ENCODE measurements at regions of chr14 and their contacts with region 1.

Region 1: GRCh38 chr14:103078093-103078749 is 5.8 kb upstream of the LBHD2 start:
- DNase-seq: peak; percentile 60 to 83 (median 74)
- ATAC-seq: peak; percentile 85
- H3K4me3 ChIP-seq: no peak overlapping the region
- H3K4me3 Mint-ChIP-seq: peak overlapping the region in 2 of 10 donors; percentile 3 to 37
- H3K27ac ChIP-seq: no peak overlapping the region
- H3K27ac Mint-ChIP-seq: no peak overlapping the region
- H3K4me1 ChIP-seq: peaks cover 0 to 5% of the 10 kb centered on the region in 2 donors
- H3K4me1 Mint-ChIP-seq: peaks cover 0 to 2% (median 0%) of the 10 kb centered on the region in 7 donors
- H3K27me3 ChIP-seq: no peaks in the 10 kb centered on the region
- H3K27me3 Mint-ChIP-seq: no peaks in the 10 kb centered on the region

Region 2: DNA sequence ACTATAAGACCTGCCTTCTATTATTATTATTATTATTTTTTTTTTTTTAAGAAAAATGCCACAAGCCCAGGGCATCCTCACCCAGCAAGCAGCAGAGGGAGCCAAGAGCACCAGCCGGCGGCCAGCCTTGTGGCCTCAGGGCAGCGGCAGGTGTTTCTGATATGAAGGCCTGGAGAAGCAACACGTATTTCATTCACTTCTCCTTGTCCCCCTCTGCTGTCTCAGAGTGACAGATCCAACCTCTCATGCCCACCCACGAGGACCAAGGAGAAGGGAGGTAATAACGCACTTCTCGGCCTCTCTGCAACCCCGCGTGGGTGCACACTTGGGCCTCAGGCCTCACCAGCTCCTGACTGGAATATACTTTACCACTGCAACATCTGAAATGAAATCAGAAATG is 46.3 kb before region 1 on chr14:
- CTCF ChIA-PET with region 1: no interaction called
- POLR2A ChIA-PET with region 1: no interaction called
- intact Hi-C with region 1: no loop called
- DNase-seq: no peak
- ATAC-seq: no peak
- H3K4me3 ChIP-seq: no peak overlapping the region
- H3K4me3 Mint-ChIP-seq: no peak overlapping the region
- H3K27ac ChIP-seq: no peak overlapping the region
- H3K27ac Mint-ChIP-seq: no peak overlapping the region
- H3K4me1 ChIP-seq: no peaks in the 10 kb centered on the region
- H3K4me1 Mint-ChIP-seq: no peaks in the 10 kb centered on the region
- H3K27me3 ChIP-seq: no peaks in the 10 kb centered on the region
- H3K27me3 Mint-ChIP-seq: peaks cover 0 to 4% (median 0%) of the 10 kb centered on the region in 5 donors

Region 3: DNA sequence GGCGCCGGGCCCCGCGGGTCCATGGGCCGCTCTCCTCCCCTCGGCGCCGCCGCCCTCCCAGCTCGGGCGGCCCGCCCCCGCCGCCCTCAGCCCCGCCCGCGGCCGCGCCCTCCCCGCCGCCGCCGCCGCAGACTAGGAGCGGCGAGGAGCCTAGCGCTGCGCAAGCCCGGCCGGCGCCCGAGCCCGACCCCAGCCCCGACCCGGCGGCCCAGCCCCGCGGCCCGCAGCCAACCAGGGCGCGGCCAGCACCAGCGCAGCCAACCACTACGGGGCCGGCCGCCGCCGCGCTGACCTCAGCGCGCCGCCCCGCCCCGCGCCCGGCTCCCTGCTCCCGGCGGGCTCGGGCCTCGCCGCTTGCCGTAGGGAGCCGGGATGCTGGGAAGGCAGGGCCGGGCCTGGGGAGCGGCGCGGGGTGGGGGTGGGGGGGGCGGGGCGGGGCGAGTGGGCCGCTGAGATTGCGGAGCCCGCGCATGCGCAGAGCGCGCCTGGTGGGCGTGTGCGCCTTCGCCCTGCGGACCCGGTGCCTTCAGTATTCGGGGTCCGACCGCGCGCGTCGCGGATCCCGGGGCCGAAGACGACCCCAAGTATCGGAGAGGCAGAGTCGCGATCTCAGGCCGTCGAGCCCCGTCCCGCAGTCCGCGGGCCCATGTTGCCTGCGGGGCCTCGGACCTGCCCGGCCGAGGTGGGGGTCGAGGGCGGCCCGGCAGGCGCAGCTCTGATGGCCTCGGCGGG is 20.7 kb before region 1 on chr14 and contains the start of gene CDC42BPB:
- CTCF ChIA-PET with region 1: no interaction called
- POLR2A ChIA-PET with region 1: no interaction called
- intact Hi-C with region 1: loop called in 1 of 2 experiments (anchors 1 kb)
- DNase-seq: peak; percentile 32 to 60 (median 52)
- ATAC-seq: peak; percentile 91
- H3K4me3 ChIP-seq: peak within 1 kb of the TSS; percentile 39
- H3K4me3 Mint-ChIP-seq: peak within 1 kb of the TSS; percentile 59 to 86 (median 74)
- H3K27ac ChIP-seq: peak within 1 kb of the TSS; percentile 21
- H3K27ac Mint-ChIP-seq: peak within 1 kb of the TSS in 2 of 9 donors; percentile 15 to 49
- H3K4me1 ChIP-seq: no peaks in the 10 kb centered on the region
- H3K4me1 Mint-ChIP-seq: peaks cover 0 to 13% (median 11%) of the 10 kb centered on the region in 7 donors
- H3K27me3 ChIP-seq: peaks cover 3 to 7% of the 10 kb centered on the region in 2 donors
- H3K27me3 Mint-ChIP-seq: peaks cover 9 to 62% (median 14%) of the 10 kb centered on the region in 5 donors
- total RNA-seq, gene CDC42BPB: 0.87 to 16.0 (median 5.5) TPM

Region 4: GRCh38 chr14:103091041-103091882 is 13.0 kb after region 1 on chr14:
- CTCF ChIA-PET with region 1: interaction called, 3 read pairs
- POLR2A ChIA-PET with region 1: no interaction called
- intact Hi-C with region 1: loop called (anchors 1 kb)
- DNase-seq: peak; percentile 38 to 80 (median 64)
- ATAC-seq: peak; percentile 94
- H3K4me3 ChIP-seq: peak overlapping the region; percentile 43
- H3K4me3 Mint-ChIP-seq: peak overlapping the region; percentile 14 to 80 (median 62)
- H3K27ac ChIP-seq: no peak overlapping the region
- H3K27ac Mint-ChIP-seq: no peak overlapping the region
- H3K4me1 ChIP-seq: no peaks in the 10 kb centered on the region
- H3K4me1 Mint-ChIP-seq: peaks cover 0 to 3% (median 0%) of the 10 kb centered on the region in 7 donors
- H3K27me3 ChIP-seq: no peaks in the 10 kb centered on the region
- H3K27me3 Mint-ChIP-seq: peaks cover 0 to 11% (median 5%) of the 10 kb centered on the region in 5 donors

Region 5: GRCh38 chr14:103207029-103207387 is 128.8 kb after region 1 on chr14:
- CTCF ChIA-PET with region 1: no interaction called
- POLR2A ChIA-PET with region 1: no interaction called
- intact Hi-C with region 1: no loop called
- DNase-seq: no peak
- ATAC-seq: no peak
- H3K4me3 ChIP-seq: no peak overlapping the region
- H3K4me3 Mint-ChIP-seq: no peak overlapping the region
- H3K27ac ChIP-seq: no peak overlapping the region
- H3K27ac Mint-ChIP-seq: no peak overlapping the region
- H3K4me1 ChIP-seq: no peaks in the 10 kb centered on the region
- H3K4me1 Mint-ChIP-seq: peaks cover 0 to 6% (median 0%) of the 10 kb centered on the region in 7 donors
- H3K27me3 ChIP-seq: no peaks in the 10 kb centered on the region
- H3K27me3 Mint-ChIP-seq: peaks cover 33 to 59% (median 41%) of the 10 kb centered on the region in 5 donors

Region 6: DNA sequence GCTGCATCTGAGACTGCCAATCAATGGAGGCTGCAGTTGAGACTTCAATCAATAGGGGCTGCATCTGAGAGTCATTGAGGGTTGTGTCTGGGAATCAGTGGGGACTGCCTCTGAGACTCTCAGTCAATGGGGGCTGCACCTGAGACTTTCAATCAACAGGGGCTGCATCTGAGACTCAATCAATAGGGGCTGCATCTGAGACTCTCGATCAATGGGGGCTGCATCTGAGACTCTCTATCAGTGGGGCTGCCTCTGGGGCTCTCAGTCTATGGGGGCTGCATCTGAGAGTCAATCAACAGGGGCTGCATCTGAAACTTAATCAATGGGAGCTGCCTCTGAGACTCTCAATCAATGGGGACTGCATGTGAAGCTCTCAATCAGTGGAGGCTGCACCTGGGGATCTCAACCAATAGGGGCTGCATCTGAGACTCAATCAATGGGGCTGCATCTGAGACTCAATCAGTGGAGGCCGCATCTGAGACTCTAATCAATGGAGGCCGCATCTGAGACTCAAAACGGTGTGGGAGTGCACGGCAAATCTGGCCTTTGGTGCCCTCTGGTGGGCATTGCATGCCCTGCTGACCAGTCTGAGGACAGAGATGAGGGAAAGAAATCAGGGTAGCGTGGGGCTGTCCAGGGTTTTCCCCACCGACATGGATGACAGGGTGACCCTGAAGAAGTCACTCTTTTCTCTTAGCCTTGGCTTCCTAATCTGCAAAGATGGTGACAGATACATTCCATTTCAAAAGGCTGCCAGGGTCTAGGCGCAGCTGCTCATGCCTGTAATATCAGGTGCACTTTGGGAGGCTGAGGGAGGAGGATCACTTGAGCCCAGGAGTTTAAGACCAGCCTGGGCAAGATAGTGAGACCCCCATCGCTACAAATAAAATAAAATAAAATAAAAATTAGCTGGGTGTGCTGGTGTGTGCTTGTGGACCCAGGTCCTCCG is 214.5 kb after region 1 on chr14:
- CTCF ChIA-PET with region 1: no interaction called
- POLR2A ChIA-PET with region 1: no interaction called
- intact Hi-C with region 1: loop called (anchors 1 kb)
- DNase-seq: peak; percentile 34 to 77 (median 56)
- ATAC-seq: peak; percentile 92
- H3K4me3 ChIP-seq: no peak overlapping the region
- H3K4me3 Mint-ChIP-seq: no peak overlapping the region
- H3K27ac ChIP-seq: no peak overlapping the region
- H3K27ac Mint-ChIP-seq: no peak overlapping the region
- H3K4me1 ChIP-seq: no peaks in the 10 kb centered on the region
- H3K4me1 Mint-ChIP-seq: peaks cover 0 to 7% (median 0%) of the 10 kb centered on the region in 7 donors
- H3K27me3 ChIP-seq: no peaks in the 10 kb centered on the region
- H3K27me3 Mint-ChIP-seq: peaks cover 10 to 27% (median 20%) of the 10 kb centered on the region in 5 donors

Region 7: DNA sequence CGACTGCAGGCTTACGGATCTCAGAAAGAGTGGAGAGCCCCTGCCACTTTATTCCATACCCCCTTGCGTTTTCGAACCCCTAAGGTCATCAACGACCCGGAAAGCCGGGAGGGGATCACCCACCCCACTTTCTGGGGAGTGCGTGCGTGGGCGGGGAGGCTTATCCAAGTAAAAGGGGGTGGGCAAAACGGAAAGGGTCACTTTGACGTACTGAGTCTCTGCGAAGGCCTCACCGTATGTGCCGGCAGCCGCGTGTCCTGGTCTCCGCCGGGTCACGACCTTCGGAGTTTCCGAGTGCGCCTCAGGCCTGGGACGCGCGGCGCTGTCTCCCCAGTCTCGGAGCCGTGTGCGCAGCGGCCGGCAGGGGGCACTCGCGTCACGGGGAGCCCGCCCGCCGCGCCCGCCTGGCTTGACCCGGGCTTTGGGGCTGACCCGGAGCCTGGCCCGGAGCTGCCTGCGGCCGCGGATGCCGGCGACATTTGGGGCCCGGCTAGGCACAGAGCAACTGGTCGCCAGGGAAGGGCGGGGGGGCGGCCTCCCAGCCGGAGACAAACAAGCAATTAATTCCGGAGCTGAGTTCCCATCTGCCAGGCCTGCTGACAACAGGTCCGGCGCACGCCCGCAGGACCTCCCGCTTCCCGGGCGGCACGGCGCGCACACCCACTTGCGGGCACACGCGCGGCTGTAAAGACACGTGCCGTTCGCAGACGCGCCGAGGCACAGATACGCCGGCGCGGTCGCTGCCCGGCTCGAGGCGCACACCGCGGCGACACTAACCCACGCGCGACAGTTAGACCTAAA is 1059.3 kb after region 1 on chr14:
- CTCF ChIA-PET with region 1: no interaction called
- POLR2A ChIA-PET with region 1: no interaction called
- intact Hi-C with region 1: no loop called
- DNase-seq: peak; percentile 8 to 77 (median 48)
- ATAC-seq: peak; percentile 72
- H3K4me3 ChIP-seq: no peak overlapping the region
- H3K4me3 Mint-ChIP-seq: peak overlapping the region; percentile 25 to 81 (median 63)
- H3K27ac ChIP-seq: no peak overlapping the region
- H3K27ac Mint-ChIP-seq: no peak overlapping the region
- H3K4me1 ChIP-seq: no peaks in the 10 kb centered on the region
- H3K4me1 Mint-ChIP-seq: peaks cover 0 to 10% (median 5%) of the 10 kb centered on the region in 7 donors
- H3K27me3 ChIP-seq: peaks cover 0 to 12% of the 10 kb centered on the region in 2 donors
- H3K27me3 Mint-ChIP-seq: peaks cover 20 to 41% (median 29%) of the 10 kb centered on the region in 5 donors

Measured in naive thymus-derived CD4-positive, alpha-beta T cell (primary cell).